ENCODE measurements at regions of chr7 and their contacts with region 1.

Region 1: GRCh38 chr7:152145853-152146466 is 120.5 kb downstream of the GALNT11 start:
- DNase-seq: no peak
- H3K4me3 Mint-ChIP-seq: peak overlapping the region; percentile 17
- H3K27ac Mint-ChIP-seq: peak overlapping the region; percentile 89
- H3K4me1 Mint-ChIP-seq: peaks cover 43% of the 10 kb centered on the region
- H3K27me3 Mint-ChIP-seq: no peaks in the 10 kb centered on the region

Region 2: DNA sequence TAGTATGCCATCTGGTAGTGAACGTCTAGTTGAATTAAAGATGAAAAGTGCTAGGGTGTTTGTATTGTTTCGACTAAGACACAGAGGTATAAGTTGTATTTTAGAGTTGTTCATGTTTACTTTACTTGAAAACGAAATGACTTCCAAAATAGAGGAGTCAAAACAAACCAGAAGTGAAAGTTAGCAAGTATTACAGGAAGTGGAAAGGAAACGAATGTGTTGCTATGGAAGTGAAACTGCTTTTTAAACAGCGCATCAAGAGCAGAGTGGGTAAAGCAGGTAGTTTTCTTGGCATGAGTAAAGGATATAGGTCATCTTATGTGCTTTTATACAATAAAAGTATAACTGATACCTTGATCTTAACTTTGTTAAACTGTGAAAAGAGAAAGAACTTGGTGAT is 209.8 kb before region 1 on chr7:
- intact Hi-C with region 1: loop called (anchors 10 kb)
- DNase-seq: no peak
- H3K4me3 Mint-ChIP-seq: peak overlapping the region; percentile 61
- H3K27ac Mint-ChIP-seq: peak overlapping the region; percentile 73
- H3K4me1 Mint-ChIP-seq: peaks cover 19% of the 10 kb centered on the region
- H3K27me3 Mint-ChIP-seq: peaks cover 12% of the 10 kb centered on the region

Region 3: GRCh38 chr7:152090747-152091146 is 55.2 kb before region 1 on chr7:
- intact Hi-C with region 1: no loop called
- DNase-seq: no peak
- H3K4me3 Mint-ChIP-seq: no peak overlapping the region
- H3K27ac Mint-ChIP-seq: no peak overlapping the region
- H3K4me1 Mint-ChIP-seq: no peaks in the 10 kb centered on the region
- H3K27me3 Mint-ChIP-seq: no peaks in the 10 kb centered on the region

Region 4: DNA sequence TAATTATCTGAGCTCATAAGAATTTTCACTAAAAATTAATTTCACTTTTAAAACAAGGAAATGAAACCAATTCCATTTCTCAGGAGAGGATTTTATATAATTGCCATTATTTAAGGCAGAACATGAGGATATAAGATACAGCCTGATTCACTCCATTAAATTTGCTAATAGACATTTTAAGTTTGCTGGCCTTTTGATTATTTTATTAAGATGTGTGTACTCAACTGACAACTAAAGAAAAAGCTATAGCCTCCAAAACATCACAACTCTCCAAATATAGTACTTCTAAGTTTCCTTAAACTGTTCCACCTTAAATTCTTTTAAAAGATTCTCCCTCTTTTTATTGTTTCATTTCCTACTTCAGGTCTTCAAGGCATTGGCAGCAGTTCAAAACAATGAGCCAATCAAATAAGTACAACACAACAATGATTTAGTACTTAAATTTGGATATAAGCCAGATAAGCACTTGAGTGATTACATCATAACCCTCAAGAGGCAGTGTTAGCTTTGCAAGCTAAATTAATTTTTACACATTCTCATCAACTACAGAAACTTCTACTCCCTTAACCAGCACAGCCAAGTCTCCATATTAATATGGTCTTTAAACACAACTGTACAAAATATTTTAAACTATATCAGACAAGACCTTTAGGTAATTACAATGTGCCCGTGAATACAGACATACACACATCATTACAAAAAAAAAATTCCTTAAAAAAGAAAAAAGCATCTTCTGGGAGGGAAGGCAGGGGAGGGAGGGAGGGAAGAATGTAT is 168.1 kb after region 1 on chr7:
- intact Hi-C with region 1: no loop called
- DNase-seq: no peak
- H3K4me3 Mint-ChIP-seq: no peak overlapping the region
- H3K27ac Mint-ChIP-seq: no peak overlapping the region
- H3K4me1 Mint-ChIP-seq: peaks cover 12% of the 10 kb centered on the region
- H3K27me3 Mint-ChIP-seq: no peaks in the 10 kb centered on the region

Measured in activated T-helper 2 cell treated with anti-CD3 and anti-CD28 coated beads, Interferon-gamma antibody, Interleukin-2, Interleukin-4, amounts not matched to agents 10 μg/mL and 5 μg/mL and 100 μg/mL, durations not matched to agents 14 hours and 24 hours and 36 hours (primary cell).